Activated T-helper 1 cell treated with anti-CD3 and anti-CD28 coated beads, Interleukin-12 subunit alpha, Interleukin-12 subunit beta, Interleukin-2, Interleukin-4 antibody, amounts not matched to agents 30 ng/mL and 10 ng/mL and 1 ng/mL, durations not matched to agents 14 hours and 24 hours and 36 hours (primary cell): ENCODE measurements at regions of chr16 and their contacts with region 1.

Region 1: DNA sequence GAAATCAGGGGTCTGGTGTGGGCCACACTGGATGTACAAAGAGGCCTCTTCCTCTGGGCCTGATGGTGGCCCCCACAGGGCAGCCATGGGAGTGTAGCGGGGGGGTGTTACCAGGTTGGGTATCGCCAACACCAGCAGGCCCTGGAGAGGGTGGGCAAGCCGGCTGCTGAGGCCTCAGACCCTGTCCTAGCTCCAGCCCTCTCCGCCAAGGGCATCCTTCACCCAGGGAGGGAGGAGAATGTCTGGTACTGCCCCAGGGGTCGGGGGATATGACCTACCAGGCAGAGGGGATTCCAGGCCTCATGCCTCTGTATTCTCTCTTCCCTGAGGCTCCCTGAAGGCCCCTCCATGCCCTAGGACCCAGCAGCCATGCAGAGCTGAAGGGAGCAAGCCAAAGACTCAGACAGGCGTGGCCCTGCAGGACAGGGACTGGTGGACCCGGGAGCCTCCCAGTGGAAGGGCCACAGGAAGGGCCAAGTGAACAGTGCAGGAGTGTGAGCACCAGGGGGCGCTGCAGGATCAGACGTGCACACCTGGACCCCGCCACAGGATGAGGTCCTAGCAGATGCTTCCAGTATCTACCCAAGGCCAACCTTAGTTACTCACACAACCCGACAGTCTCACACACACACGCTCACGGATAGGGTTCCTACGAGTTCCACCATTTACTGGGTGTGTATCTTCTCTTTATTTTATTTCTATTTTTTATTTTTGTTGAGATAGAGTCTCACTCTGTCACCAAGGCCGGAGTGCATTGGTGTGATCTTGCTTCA is 10.9 kb upstream of the CES4A start:
- DNase-seq: peak; percentile 83
- H3K4me3 Mint-ChIP-seq: no peak overlapping the region
- H3K27ac Mint-ChIP-seq: peak overlapping the region; percentile 75
- H3K4me1 Mint-ChIP-seq: peaks cover 57% of the 10 kb centered on the region
- H3K27me3 Mint-ChIP-seq: no peaks in the 10 kb centered on the region

Region 2: GRCh38 chr16:67000384-67001351 is 23.1 kb after region 1 on chr16:
- intact Hi-C with region 1: loop called (anchors 1 kb)
- DNase-seq: peak; percentile 55
- H3K4me3 Mint-ChIP-seq: peak overlapping the region; percentile 76
- H3K27ac Mint-ChIP-seq: peak overlapping the region; percentile 88
- H3K4me1 Mint-ChIP-seq: peaks cover 45% of the 10 kb centered on the region
- H3K27me3 Mint-ChIP-seq: no peaks in the 10 kb centered on the region

Region 3: DNA sequence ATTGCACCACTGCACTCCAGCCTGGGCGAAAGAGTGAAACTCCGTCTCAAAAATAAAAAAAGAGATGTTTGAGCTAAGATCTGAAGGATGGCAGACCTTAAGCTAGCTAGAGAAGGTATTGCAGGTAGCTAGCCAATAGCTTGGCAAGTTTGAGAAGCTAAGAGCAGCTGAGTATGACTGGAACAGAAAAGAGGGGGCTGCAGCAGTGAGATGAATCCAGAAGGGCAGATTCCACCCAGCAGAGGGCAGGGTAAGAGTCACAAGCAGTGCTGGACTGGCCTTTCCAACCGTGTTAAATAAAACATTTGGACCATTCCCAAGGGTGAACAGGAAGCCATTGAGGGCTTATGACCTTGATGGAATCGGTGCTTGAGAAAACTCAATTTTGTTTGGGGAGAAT is 126.5 kb after region 1 on chr16:
- intact Hi-C with region 1: loop called (anchors 1 kb)
- DNase-seq: no peak
- H3K4me3 Mint-ChIP-seq: no peak overlapping the region
- H3K27ac Mint-ChIP-seq: no peak overlapping the region
- H3K4me1 Mint-ChIP-seq: peaks cover 31% of the 10 kb centered on the region
- H3K27me3 Mint-ChIP-seq: no peaks in the 10 kb centered on the region

Region 4: DNA sequence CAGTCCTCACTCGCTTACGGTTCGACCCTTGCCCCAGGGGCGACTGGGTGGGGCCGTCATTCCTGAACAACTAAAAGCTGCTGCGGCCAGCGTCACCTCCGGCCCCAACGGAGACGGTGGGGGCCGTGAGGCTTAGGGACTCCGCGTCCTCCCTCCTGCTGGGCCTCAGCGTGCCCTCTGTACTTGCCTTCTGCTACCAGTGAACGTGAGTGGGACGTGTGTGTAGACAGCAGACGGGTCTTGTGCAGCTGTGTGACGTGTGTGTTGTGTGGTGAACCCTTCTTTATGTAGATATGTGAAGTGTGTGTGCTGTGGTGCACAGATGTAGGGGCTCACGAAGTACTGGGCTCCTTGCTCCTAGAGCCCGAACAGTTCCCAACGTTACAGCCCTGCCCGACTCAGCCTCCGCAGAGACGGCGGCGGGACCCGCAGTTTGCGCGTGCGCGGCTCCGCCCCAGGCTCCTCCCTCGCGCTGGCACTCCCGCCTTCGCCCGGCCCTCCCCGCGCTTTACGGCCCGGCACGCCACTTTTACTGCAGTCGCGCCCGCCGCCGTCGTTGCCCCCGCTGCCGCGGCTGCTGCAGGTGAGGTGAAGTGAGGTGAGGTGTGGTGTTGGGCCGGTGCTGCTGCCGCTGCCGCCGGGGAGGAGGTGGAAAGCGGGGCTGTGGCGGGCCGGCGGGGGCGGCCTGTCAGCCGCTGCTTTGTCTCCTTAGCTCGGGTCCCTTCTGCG is 132.0 kb after region 1 on chr16 and contains the start of gene PHAF1:
- intact Hi-C with region 1: loop called (anchors 2 kb)
- DNase-seq: peak; percentile 93
- H3K4me3 Mint-ChIP-seq: peak within 1 kb of the TSS; percentile 96
- H3K27ac Mint-ChIP-seq: peak within 1 kb of the TSS; percentile 87
- H3K4me1 Mint-ChIP-seq: peaks cover 45% of the 10 kb centered on the region
- H3K27me3 Mint-ChIP-seq: no peaks in the 10 kb centered on the region
- total RNA-seq, gene PHAF1: 20.5 and 20.6 TPM in 2 replicates

Region 5: GRCh38 chr16:67183627-67184328 is 206.3 kb after region 1 on chr16 and contains the start of gene MATCAP1:
- intact Hi-C with region 1: loop called (anchors 1 kb)
- DNase-seq: peak; percentile 94
- H3K4me3 Mint-ChIP-seq: peak within 1 kb of the TSS; percentile 62
- H3K27ac Mint-ChIP-seq: no peak within 1 kb of the TSS
- H3K4me1 Mint-ChIP-seq: peaks cover 20% of the 10 kb centered on the region
- H3K27me3 Mint-ChIP-seq: peaks cover 8% of the 10 kb centered on the region
- total RNA-seq, gene MATCAP1: 45.5 and 48.2 TPM in 2 replicates